H1 (cell line): ENCODE measurements at regions of chr1 and their contacts with region 1.

Region 1: GRCh38 chr1:24558902-24559791 is 3.3 kb downstream of the NCMAP start:
- DNase-seq: peak in 1 of 2 experiments; percentile 82
- H3K4me3 ChIP-seq: no peak overlapping the region
- H3K27ac ChIP-seq: no peak overlapping the region
- H3K4me1 ChIP-seq: peaks cover 2 to 10% (median 3%) of the 10 kb centered on the region in 4 experiments; a peak in 4 of 7 replicates
- H3K27me3 ChIP-seq: peaks cover 0 to 30% (median 20%) of the 10 kb centered on the region in 4 experiments; a peak in 5 of 7 replicates
- CTCF ChIP-seq: no peak
- EP300 ChIP-seq: no peak
- POLR2A ChIP-seq: no peak
- RAD21 ChIP-seq: no peak

Region 2: GRCh38 chr1:24541711-24542346 is 17.3 kb before region 1 on chr1:
- CTCF ChIA-PET with region 1: interaction called, 11 read pairs
- POLR2A ChIA-PET with region 1: no interaction called
- DNase-seq: peak in 1 of 2 experiments; percentile 76
- H3K4me3 ChIP-seq: no peak overlapping the region
- H3K27ac ChIP-seq: no peak overlapping the region
- H3K4me1 ChIP-seq: peaks cover 0 to 5% (median 0%) of the 10 kb centered on the region in 4 experiments; a peak in 1 of 7 replicates
- H3K27me3 ChIP-seq: no peaks in the 10 kb centered on the region
- CTCF ChIP-seq: peak; percentile 75 to 84 (median 78)
- EP300 ChIP-seq: no peak
- POLR2A ChIP-seq: no peak
- RAD21 ChIP-seq: peak; percentile 81 to 84